ENCODE measurements at regions of chr18 and their contacts with region 1.

Region 1: DNA sequence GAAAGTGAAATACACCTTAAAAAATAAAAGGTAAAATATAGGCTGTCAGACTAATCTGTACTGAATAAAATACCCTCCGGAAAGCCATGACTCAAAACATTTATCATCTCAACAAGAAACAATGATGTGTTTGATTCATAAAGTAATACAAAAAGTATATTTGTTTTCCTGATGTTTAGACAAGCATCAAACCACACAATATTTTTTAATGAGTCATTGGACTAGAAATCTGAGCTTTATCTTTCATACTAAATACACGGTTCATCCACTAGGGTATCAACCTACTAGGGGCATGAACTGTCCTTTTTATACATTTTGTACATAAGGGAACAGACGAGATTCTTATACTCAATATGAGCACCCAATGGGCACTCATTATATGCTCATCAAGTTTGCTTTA is 31.3 kb downstream of the CD226 start:
- DNase-seq: no peak
- ATAC-seq: peak; percentile 67
- H3K4me3 Mint-ChIP-seq: no peak overlapping the region
- H3K27ac Mint-ChIP-seq: no peak overlapping the region
- H3K4me1 Mint-ChIP-seq: peaks cover 79% of the 10 kb centered on the region
- H3K27me3 Mint-ChIP-seq: no peaks in the 10 kb centered on the region

Region 2: DNA sequence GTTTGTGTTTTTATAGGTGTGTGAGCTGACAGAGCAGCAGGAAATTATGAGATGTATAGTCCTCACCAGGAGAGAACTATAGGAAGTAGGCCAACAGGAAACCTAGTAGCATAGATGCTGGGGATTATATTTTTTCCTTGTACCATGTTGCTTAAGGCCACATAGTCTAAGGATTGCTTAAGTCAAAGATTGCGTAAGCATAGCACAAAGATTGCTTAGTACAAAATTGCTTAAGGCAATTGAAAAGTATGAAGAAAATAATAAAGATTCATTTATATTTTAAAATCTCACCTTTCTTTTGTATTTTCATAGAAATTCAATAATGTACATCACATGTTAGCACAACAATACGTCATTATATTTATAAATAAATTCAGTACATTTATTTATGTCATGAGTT is 1137.2 kb before region 1 on chr18:
- CTCF ChIA-PET with region 1: no interaction called
- POLR2A ChIA-PET with region 1: no interaction called
- intact Hi-C with region 1: no loop called
- DNase-seq: no peak
- ATAC-seq: no peak
- H3K4me3 Mint-ChIP-seq: no peak overlapping the region
- H3K27ac Mint-ChIP-seq: no peak overlapping the region
- H3K4me1 Mint-ChIP-seq: no peaks in the 10 kb centered on the region
- H3K27me3 Mint-ChIP-seq: no peaks in the 10 kb centered on the region

Region 3: GRCh38 chr18:69935319-69936190 is 19.1 kb after region 1 on chr18:
- CTCF ChIA-PET with region 1: interaction called, 11 read pairs
- POLR2A ChIA-PET with region 1: no interaction called
- intact Hi-C with region 1: no loop called
- DNase-seq: peak; percentile 93
- ATAC-seq: peak; percentile 92
- H3K4me3 Mint-ChIP-seq: no peak overlapping the region
- H3K27ac Mint-ChIP-seq: no peak overlapping the region
- H3K4me1 Mint-ChIP-seq: peaks cover 34% of the 10 kb centered on the region
- H3K27me3 Mint-ChIP-seq: no peaks in the 10 kb centered on the region

Measured in activated CD4-positive, alpha-beta T cell treated with anti-CD3 and anti-CD28 coated beads for 36 hours (primary cell).